ENCODE measurements at regions of chr9 and their contacts with region 1.

Region 1: GRCh38 chr9:88041447-88041846 is 67.1 kb upstream of the CDK20 start:
- DNase-seq: no peak
- ATAC-seq: no peak

Region 2: GRCh38 chr9:87678650-87679515 is 362.6 kb before region 1 on chr9:
- intact Hi-C with region 1: loop called (anchors 5 kb)
- DNase-seq: no peak
- ATAC-seq: peak; percentile 27

Measured in Right ventricle myocardium inferior (tissue), 1 donor.